Astrocyte of the cerebellum (primary cell): ENCODE measurements at regions of chr12 and their contacts with region 1.

Region 1: DNA sequence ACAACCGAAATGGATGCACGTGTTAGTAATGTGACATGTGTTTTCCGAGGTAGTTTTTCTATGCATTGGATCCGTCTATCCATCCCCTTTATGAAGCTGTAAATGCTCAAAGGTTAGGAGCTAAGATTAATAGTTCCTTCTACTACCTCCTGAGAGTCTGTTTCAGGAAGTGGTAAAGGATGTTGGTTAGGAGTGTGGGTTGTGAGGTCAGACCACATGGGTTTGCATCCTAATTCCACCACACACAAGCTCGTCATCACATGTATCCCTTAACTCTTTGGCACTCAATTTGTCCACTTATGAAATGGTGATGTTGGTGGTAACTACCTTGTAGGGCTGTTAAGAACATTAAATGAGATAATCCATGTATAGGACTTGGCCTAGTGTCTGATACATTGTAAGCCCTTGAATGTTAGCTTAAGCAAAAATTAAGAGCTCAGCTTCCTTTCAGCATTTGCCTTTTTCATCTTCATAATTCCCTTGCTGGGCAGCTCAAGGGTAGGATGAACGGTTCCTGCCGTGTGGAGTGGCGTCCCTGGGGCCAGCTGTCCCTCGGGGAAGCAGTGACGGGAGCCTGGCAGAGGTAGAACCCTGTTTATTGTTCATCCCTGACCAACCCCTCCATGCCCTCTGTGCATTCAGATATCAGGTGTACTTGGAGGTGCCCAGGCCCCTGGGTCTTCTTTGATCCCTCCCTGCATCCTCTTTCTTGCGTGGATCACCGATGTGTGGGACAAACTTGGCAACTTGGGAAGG is 52.3 kb downstream of the TSPAN9 start:
- DNase-seq: peak; percentile 91
- H3K4me3 ChIP-seq: no peak overlapping the region
- CTCF ChIP-seq: no peak

Region 2: DNA sequence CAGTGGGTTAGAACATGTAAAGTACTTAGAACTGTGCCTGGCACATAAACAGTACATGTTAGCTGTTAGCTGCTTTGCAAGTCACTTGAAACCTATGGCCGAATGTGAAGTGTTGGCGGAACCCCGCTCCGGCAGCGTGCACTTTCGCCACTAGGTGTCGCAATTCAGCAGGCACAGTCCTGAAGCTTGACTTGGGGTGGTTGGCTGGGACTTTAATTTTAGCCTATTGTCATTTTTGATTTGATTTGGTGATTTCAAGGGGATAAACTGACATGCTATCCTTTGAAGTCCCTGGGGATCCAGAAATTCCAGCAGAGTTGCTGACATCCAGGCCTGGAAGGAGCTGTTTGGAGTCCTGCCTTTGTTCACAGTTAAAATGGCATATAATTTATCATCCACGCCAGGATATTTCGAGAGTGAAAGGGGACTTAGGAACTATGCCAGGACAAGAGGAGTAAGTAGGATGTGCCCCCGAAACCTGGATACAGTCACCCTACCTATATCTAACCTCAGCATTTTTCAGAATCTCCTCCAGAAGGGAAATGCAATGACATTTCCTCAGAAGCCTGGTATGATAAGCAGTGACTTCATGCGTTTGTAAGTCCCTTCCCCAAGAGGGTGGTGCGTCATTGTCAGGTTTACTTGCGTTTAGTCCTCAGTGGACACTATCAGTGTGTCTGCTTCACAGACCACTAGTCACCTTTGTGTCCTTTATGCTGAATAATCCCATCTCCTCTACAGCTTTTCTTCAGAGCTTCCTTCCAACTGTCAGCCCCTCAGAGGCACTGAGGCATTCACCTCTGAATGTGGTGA is 55.8 kb before region 1 on chr12:
- in situ Hi-C with region 1: loop called (anchors 5 kb)
- DNase-seq: peak; percentile 81
- H3K4me3 ChIP-seq: no peak overlapping the region
- CTCF ChIP-seq: peak; percentile 99

Region 3: DNA sequence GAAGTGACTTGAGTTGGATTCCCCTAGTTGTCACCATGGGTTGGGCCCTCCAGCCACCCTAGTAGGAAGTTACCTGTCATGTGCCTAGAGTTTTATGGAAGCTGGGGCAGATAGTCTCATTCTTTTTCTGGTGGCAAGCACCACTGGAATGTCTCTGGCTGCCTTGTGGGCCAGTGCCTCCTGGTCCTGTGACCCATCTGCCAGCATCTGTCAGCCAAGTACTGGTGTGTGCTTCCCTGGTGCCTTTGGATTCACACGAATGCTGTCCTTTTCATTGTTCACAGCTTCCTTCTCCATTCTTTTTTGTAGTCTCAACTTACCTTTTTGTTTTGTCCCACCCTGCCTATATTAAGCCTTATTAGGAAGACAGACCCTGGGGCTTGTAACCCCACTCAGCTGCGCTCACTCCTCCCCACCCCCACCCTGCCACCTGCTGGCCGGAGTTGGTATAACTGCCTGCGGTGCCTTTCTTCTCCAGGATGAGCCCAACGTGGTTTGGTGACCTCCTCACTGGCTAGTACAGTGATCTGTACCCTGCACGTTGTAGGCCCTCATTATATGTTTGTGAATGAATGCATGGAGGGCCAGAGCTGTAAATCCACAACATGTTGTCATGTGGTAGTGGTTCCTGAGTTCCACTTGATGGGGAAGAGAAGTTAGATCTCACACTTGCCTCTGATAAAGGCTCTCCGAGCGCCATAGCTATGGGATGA is 73.4 kb after region 1 on chr12:
- in situ Hi-C with region 1: no loop called
- DNase-seq: no peak
- H3K4me3 ChIP-seq: no peak overlapping the region
- CTCF ChIP-seq: peak; percentile 96

Region 4: GRCh38 chr12:3231399-3231876 is 102.0 kb after region 1 on chr12:
- in situ Hi-C with region 1: loop called (anchors 5 kb)
- DNase-seq: no peak
- H3K4me3 ChIP-seq: no peak overlapping the region
- CTCF ChIP-seq: no peak

Region 5: GRCh38 chr12:3275171-3276041 is 145.9 kb after region 1 on chr12:
- in situ Hi-C with region 1: loop called (anchors 5 kb)
- DNase-seq: peak; percentile 49
- H3K4me3 ChIP-seq: no peak overlapping the region
- CTCF ChIP-seq: peak; percentile 97